H1 (cell line): ENCODE measurements at regions of chr21 and their contacts with region 1.

Region 1: DNA sequence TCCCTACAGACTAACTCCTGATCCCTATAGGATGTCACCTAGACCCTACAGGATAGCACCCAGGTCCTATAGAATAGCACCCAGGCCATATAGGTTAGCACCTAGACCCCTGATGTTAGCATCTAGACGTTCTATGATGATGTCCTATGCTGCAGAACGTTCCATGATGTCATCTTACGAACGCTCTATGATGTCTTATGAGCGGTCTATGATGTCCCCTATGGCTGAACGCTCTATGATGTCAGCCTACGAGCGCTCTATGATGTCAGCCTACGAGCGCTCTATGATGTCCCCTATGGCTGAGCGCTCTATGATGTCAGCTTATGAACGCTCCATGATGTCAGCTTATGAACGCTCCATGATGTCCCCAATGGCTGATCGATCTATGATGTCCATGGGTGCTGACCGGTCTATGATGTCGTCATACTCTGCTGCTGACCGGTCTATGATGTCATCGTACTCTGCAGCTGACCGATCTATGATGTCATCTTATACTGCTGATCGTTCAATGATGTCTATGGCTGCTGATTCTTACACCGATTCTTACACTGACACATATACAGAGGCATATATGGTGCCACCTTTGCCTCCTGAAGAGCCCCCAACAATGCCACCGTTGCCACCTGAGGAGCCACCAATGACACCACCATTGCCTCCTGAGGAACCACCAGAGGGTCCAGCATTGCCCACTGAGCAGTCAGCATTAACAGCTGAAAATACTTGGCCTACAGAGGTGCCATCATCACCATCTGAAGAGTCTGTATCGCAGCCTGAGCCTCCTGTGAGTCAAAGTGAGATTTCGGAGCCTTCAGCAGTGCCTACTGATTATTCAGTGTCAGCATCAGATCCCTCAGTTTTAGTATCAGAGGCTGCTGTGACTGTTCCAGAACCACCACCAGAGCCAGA is 9.5 kb downstream of the SON start:
- DNase-seq: no peak
- H3K4me3 ChIP-seq: no peak overlapping the region
- H3K27ac ChIP-seq: no peak overlapping the region
- H3K4me1 ChIP-seq: no peaks in the 10 kb centered on the region
- H3K27me3 ChIP-seq: no peaks in the 10 kb centered on the region
- CTCF ChIP-seq: no peak
- EP300 ChIP-seq: no peak
- POLR2A ChIP-seq: peak; percentile 3 to 43
- RAD21 ChIP-seq: no peak

Region 2: DNA sequence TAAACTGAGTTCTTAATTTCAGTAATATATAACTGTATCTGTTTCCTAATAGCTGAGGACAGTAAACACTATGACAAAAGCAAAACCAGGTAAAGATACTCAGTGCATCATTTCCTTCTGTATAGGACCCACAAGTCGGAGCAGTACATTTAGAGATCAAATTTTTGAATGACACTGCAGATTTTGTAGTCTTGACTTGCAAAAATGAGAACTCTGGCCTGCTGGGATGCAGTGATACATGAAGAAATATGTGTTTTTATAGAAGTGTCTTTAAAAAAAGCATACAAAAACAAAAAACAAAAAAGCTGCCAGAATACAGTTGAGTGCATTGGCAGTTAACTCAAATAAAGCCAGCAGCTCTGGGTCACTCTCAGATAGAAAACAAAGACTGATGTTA is 29.4 kb before region 1 on chr21:
- CTCF ChIA-PET with region 1: no interaction called
- POLR2A ChIA-PET with region 1: interaction called, 14 read pairs
- DNase-seq: no peak
- H3K4me3 ChIP-seq: no peak overlapping the region
- H3K27ac ChIP-seq: no peak overlapping the region
- H3K4me1 ChIP-seq: no peaks in the 10 kb centered on the region
- H3K27me3 ChIP-seq: peaks cover 0 to 1% (median 0%) of the 10 kb centered on the region in 4 experiments; a peak in 1 of 7 replicates
- CTCF ChIP-seq: no peak
- EP300 ChIP-seq: no peak
- POLR2A ChIP-seq: no peak
- RAD21 ChIP-seq: no peak

Region 3: DNA sequence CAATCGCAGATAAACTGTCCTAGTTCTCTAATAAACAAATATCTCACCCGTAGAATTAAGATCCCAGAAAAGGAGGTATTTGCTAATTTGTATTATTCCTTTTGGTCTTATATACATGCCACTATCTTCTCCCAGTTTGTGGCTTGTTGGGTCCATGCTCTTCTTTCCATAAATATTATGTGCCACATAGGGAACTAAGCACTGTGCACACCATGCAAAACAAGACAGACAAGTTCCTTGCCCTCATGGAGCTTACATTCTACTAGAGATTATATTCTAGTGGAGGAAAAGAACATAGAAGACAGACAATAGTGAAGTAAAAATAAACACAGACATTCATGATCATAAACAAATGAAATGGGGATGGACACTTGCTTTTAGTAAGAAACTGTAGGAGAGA is 15.1 kb before region 1 on chr21:
- CTCF ChIA-PET with region 1: interaction called, 4 read pairs
- POLR2A ChIA-PET with region 1: interaction called, 64 read pairs
- DNase-seq: no peak
- H3K4me3 ChIP-seq: no peak overlapping the region
- H3K27ac ChIP-seq: no peak overlapping the region
- H3K4me1 ChIP-seq: peaks cover 0 to 2% (median 0%) of the 10 kb centered on the region in 4 experiments; a peak in 3 of 7 replicates
- H3K27me3 ChIP-seq: no peaks in the 10 kb centered on the region
- CTCF ChIP-seq: no peak
- EP300 ChIP-seq: no peak
- POLR2A ChIP-seq: no peak
- RAD21 ChIP-seq: no peak